ENCODE measurements at regions of chr20 and their contacts with region 1.

Region 1: GRCh38 chr20:32336918-32337347 is 21.2 kb upstream of the ASXL1 start:
- DNase-seq: peak; percentile 44
- H3K4me3 ChIP-seq: no peak overlapping the region
- H3K27ac ChIP-seq: no peak overlapping the region
- H3K4me1 ChIP-seq: peaks cover 29% of the 10 kb centered on the region
- H3K27me3 ChIP-seq: no peaks in the 10 kb centered on the region
- CTCF ChIP-seq: peak; percentile 51 to 53
- POLR2A ChIP-seq: no peak

Region 2: GRCh38 chr20:32204205-32205085 is 132.5 kb before region 1 on chr20:
- CTCF ChIA-PET with region 1: no interaction called
- POLR2A ChIA-PET with region 1: no interaction called
- dilution Hi-C with region 1: no loop called
- intact Hi-C with region 1: no loop called
- DNase-seq: no peak
- H3K4me3 ChIP-seq: no peak overlapping the region
- H3K27ac ChIP-seq: no peak overlapping the region
- H3K4me1 ChIP-seq: peaks cover 20% of the 10 kb centered on the region
- H3K27me3 ChIP-seq: no peaks in the 10 kb centered on the region
- CTCF ChIP-seq: no peak
- POLR2A ChIP-seq: no peak

Region 3: DNA sequence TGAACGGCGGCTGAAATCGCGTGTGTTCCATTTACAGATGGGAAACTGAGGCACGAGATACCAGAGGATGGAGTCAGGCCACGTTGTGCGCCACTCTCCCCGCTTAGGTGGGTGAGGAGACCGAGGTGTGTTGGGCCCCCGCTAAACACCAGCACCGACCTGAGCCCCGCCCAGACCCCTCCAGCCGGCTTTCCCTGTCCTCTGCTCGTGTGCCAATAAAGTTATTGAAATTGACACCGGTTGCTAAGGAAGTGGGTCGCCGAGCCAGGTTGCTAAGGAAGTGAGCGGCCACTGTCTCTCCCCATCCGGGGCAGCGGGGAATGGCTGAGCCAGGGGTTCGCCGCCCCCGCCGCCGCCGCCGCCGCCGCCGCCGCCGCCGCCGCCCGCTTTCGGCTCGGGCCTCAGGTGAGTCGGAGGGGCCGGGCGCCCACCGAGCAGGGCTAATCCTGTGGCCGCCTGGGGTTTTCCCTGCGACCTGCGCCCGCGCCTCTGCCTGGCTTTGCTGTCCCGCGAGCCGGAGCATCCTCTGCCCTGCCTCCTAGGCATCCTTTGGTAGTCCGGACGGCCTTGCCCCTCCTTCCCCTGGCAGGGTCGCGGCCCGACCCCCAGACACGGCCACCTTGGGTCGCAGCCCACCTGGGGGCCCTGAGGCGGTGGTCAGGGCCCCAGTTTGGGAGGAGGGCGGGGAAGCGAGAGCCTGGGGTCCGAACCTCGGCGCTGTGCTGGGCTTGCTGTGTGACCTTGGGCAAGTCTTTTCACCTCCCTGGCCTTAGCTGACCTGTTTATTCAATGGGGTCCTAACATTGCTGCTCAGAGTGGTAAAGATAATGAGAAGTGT is 59.4 kb before region 1 on chr20 and contains the start of gene KIF3B:
- CTCF ChIA-PET with region 1: no interaction called
- POLR2A ChIA-PET with region 1: no interaction called
- dilution Hi-C with region 1: no loop called
- intact Hi-C with region 1: loop called (anchors 5 kb)
- DNase-seq: peak; percentile 75
- H3K4me3 ChIP-seq: peak within 1 kb of the TSS; percentile 63 to 99 (median 82)
- H3K27ac ChIP-seq: peak within 1 kb of the TSS; percentile 71
- H3K4me1 ChIP-seq: peaks cover 13% of the 10 kb centered on the region
- H3K27me3 ChIP-seq: peaks cover 3 to 7% of the 10 kb centered on the region in 2 experiments
- CTCF ChIP-seq: no peak
- POLR2A ChIP-seq: no peak
- total RNA-seq, gene KIF3B: 25.1 and 26.3 TPM in 2 replicates

Region 4: DNA sequence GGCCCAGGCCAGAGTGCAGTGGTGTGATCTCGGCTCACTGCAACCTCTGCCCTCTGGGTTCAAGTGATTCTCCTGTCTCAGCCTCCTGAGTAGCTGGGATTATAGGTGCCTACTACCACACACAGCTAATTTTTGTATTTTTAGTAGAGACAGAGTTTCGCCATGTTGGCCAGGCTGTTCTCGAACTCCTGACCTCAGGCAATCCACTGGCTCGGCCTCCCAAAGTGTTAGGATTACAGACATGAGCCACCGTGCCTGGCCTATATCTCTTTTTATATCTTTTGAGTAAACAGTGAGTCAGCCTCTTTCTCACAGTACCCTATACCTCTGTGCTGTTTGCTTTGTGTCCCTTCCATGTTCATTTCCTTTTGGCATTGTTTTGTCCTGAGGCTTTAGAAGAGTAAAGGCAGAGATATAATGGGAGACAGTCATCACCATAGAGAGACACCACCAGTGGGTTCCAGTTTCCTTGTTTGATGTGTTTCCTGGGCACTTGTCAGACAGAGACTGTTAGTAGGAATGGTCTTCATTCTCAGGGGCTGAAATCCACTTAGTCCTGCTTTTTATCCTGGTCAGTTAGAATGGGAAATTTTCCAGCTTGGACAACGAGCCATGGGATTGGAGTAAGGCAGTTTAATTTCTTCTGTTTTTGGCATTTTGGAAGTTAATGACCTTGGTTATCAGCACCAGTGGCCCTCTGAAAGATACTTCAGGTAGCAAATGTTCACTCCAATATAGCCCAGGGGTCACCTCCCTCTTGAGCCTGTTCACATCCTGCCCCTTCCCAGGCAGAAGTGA is 11.0 kb before region 1 on chr20:
- CTCF ChIA-PET with region 1: no interaction called
- POLR2A ChIA-PET with region 1: no interaction called
- dilution Hi-C with region 1: no loop called
- intact Hi-C with region 1: loop called (anchors 1 kb)
- DNase-seq: peak; percentile 94
- H3K4me3 ChIP-seq: no peak overlapping the region
- H3K27ac ChIP-seq: peak overlapping the region; percentile 91
- H3K4me1 ChIP-seq: peaks cover 17% of the 10 kb centered on the region
- H3K27me3 ChIP-seq: no peaks in the 10 kb centered on the region
- CTCF ChIP-seq: no peak
- POLR2A ChIP-seq: no peak

Region 5: DNA sequence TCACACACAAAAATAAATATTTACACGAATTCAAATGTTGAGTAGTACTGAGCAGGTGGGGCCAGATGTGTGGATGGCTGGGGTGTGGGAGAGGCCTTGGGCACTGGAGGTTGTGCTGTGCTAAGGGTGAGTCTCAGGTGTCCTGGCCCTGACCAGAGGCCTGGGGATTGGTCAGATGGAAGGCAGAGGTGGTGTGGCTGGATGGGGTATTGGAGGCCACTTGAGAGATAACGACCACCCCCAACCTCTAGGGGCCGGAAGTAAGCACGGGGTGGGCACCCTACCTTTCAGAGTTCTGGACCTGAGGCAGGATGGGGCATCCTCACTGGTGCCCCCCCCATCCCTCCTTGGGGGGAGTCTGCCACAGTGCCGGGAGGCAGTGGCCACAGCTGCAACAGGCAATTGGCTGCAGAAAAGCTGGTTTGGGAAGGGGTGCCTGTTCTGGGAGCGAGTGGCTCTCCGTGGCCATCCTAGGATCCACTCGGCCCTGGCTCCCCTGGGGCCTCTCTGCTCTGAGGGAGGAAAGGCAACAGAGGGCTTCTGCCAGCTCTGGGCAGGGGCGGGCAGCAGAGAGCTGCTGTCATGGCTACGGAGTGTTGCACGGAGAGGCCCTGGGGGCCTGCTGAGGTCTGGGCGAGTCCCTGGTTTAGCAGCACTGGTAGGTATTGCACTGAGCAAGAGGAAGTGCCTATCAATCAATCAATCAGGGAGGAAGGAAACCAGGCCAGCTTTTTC is 108.8 kb after region 1 on chr20:
- CTCF ChIA-PET with region 1: interaction called, 3 read pairs
- POLR2A ChIA-PET with region 1: no interaction called
- dilution Hi-C with region 1: no loop called
- intact Hi-C with region 1: loop called (anchors 5 kb)
- DNase-seq: no peak
- H3K4me3 ChIP-seq: no peak overlapping the region
- H3K27ac ChIP-seq: no peak overlapping the region
- H3K4me1 ChIP-seq: peaks cover 14% of the 10 kb centered on the region
- H3K27me3 ChIP-seq: no peaks in the 10 kb centered on the region
- CTCF ChIP-seq: no peak
- POLR2A ChIP-seq: no peak